Activated CD4-positive, alpha-beta T cell treated with anti-CD3 and anti-CD28 coated beads, Interleukin-2, amount 10 ng/mL, durations not matched to agents 24 days and 14 days (primary cell): ENCODE measurements at regions of chr3 and their contacts with region 1.

Region 1: DNA sequence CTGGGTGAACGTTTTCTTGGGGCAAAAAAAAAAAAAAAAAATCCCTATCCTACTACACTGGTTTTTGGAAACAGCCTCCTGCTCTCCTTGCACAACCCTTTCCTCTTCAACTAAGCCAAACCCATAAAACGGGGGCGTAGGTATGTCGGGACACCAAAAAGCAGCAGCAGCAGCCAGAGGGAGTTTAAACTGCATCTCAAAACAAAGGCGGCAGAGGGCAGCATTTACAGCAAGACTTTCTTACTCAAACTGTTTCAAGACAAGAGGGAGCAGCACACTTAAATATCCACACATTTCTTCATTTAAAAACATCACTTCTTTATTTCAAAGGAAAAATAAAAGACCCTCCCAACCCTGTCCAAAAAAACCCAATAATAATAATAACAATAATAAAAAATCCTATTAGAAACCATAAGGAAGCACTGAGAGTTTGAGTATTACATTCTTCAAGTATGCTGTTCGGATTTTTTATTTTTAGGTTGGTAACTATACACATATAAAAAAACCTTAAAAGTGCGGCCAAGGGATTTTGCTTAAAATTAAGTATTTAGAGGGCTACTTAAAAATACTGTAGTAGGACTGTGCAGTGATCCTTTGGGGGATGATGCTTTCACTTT is 43.9 kb upstream of the PLXND1 start:
- DNase-seq: peak; percentile 86
- H3K4me3 Mint-ChIP-seq: no peak overlapping the region
- H3K27ac Mint-ChIP-seq: no peak overlapping the region
- H3K4me1 Mint-ChIP-seq: peaks cover 1% of the 10 kb centered on the region
- H3K27me3 Mint-ChIP-seq: peaks cover 7% of the 10 kb centered on the region

Region 2: DNA sequence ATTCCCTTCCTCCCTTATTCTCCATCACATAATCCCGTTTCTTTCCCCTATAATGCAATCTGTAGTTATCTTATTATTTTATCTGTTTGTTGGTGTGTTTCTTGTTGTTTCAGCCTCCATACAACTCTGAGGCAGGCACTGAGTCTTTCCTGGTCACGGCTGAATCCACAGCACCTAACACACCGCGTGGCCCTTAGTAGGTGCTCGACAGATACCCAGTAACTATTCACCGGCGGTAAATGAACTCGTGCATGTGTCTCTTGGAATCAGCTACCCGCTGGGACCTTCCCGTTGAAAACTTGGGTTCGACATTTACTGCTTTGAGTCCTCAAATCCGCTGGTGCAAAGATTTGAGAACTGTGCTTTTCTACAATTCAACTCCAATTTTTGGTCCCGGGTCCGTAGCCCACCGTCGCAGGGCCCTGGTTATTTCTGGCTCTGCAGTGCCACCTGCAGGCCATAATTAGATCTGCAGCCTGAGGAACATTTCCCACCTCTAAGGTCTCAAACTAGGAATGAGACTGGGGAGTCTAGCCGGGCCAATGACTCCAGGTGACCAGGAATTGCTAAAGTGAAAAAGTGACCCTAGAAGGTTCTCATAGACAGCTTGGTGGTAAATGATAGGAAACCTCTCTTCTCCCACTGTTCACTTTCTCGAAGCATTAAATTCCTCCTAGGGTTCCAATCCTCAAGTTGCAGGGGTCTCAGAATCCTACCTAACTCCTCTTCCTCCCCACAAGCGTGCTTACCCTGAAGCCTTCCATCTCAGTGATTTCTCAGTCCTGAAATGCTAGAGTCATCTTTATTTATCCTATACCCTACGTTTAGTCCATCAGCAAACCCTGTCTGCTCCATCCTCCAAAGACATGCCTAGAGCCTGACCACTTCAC is 284.1 kb after region 1 on chr3:
- intact Hi-C with region 1: loop called (anchors 1 kb)
- DNase-seq: peak; percentile 73
- H3K4me3 Mint-ChIP-seq: no peak overlapping the region
- H3K27ac Mint-ChIP-seq: no peak overlapping the region
- H3K4me1 Mint-ChIP-seq: peaks cover 6% of the 10 kb centered on the region
- H3K27me3 Mint-ChIP-seq: peaks cover 7% of the 10 kb centered on the region